ENCODE measurements at regions of chr12 and their contacts with region 1.

Region 1: DNA sequence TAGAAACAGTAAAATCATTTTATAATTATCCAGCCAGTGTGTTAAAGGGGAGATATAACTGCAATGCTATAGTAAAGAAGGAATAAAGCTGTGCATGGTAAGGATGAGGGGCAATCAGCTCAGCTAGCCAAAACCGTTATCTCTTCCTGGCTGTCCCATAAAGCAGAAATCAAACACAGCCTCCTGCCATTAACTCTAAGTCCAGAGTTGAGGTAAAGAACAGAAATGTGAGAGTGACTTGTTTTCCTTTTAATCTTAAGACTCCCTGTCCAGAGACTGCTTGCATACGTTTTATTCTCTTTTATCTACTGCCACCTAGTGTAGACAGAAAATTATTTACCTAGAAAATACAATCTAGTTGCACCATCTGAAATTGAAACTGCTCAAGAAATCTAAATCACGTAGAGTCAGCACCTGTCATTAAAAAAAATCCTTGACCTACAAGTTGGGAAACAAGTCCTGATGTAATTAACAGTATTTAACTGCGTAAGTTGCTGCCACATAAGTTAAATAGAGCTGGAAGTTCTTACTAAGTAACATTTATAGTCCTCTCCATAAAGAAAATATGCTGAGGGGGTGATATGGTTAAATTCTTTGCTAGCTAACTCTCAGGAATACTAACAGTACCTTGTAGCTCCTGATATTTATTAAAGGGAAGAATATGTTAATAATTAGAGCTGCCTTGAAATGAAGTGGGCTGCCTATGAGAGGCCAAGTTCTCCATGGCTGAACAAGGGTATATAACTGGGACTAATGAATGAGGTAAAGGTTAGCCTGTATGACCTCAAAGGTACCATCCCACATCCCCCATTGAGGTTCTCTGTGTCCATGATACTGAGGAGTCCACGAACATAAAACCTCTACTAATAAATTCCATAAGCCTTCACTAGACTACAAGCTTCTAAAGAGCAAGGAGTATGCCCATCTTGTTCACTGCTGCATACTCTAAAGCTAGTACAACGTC is 62.7 kb downstream of the GALNT4 start:
- DNase-seq: no peak
- ATAC-seq: peak; percentile 90 to 93

Region 2: DNA sequence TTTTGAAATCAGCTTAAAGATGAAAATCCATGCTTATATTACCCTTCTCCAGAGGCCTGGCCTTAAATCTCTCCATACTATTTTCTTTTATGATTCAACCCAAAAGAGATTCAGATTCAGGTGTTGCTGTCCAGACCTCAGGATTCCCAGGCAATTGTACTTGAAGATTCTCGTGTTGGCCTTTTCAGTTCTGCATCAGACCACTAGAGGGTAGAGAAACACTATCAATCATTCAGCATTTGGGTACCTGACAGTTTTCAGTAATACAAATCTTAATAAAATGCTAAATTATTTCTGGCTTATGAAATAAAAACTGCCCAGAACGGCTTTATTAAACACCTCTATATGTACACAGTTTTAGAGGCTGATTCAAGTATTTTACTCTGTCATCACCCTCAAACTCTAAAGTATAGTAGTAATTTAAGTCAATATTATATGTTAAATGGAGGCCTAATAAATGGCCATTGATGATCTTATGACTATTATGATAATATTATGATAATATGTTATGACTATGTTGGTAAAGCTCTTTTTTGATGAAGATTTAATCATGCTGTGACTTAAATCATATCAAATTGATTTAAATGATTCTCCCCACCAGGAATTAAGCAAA is 410.8 kb before region 1 on chr12:
- intact Hi-C with region 1: loop called (anchors 1 to 2 kb)
- DNase-seq: no peak
- ATAC-seq: peak; percentile 81 to 90

Region 3: DNA sequence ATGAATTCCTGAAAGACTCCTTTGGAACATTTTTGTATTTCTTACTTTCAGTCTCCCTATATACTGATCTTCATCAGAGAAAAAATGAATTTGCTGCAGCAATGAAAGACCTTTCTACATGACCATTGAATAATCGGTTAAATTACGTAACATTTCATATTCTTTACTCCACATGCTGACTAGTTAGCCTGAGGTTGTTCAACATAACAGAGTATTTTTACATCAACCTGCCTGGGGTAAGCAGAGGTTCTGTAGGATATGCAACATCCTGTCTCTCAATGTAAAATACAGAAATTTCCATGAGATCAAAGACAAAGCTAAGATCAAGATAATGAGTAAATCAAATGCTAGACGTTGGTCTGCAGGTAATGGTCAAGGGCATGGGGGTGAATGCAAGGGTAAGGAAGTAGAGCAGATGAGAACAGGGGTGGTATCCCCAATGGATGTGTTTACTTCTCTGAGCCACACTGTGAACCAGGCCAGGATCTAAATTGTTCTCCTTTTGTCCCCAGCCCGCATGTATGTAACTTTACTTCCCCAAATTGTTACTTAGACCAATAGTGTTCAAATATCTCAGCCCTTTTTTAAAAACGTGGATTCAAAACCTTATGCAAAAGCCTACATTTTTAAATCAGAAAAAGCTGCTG is 155.0 kb before region 1 on chr12:
- intact Hi-C with region 1: no loop called
- DNase-seq: no peak
- ATAC-seq: peak in 1 of 2 donors; percentile 23

Measured in left cardiac atrium (tissue), 4 donors.